AG04449 (cell line): ENCODE measurements at regions of chr6 and their contacts with region 1.

Region 1: DNA sequence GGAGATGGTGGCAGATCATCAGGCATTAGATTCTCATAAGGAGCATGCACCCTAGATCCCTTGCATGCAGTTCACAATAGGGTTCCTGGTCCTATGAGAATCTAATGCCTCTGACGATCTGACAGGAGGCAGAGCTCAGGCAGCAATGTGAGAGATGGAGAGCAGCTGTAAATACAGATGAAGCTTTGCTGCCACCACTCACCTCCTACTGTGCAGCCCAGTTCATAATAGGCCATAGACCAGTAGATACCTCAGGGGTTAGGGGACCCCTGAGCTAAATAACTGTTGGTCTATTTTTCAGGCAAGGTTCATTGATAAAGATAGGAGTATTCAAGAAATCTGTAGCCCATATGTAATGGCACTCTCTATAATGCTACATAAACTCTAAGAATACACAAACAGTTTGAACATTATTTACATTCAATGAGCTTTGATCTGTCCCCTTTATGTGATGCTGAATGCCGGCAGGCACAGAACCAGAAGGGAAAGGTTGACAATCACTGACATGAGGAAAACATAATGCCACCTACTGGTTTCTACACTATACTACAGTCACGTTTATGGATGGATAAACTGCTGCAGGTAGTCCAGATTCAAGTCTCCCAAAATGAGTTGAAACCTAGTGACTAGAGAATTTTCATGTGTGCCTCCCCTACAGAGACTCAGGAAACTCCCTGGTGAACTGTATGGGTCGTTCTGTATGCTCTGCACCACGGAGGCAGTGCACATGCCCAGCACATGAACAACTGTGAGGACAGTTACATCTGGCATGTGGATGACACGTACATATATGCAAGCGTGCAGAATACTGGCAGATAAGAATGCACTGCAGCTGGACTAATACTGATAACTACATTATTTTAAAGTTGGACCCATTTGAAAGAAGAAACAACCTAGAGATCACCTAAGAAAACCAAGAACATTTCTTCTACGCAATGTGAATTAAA is 72.0 kb downstream of the DST start:
- DNase-seq: no peak
- H3K4me3 ChIP-seq: no peak overlapping the region
- CTCF ChIP-seq: peak; percentile 49

Region 2: GRCh38 chr6:56359201-56359899 is 211.3 kb before region 1 on chr6:
- CTCF ChIA-PET with region 1: interaction called, 31 read pairs
- POLR2A ChIA-PET with region 1: no interaction called
- DNase-seq: no peak
- H3K4me3 ChIP-seq: no peak overlapping the region
- CTCF ChIP-seq: peak; percentile 66

Region 3: GRCh38 chr6:56370561-56371211 is 200.0 kb before region 1 on chr6:
- CTCF ChIA-PET with region 1: interaction called, 23 read pairs
- POLR2A ChIA-PET with region 1: no interaction called
- DNase-seq: peak; percentile 53
- H3K4me3 ChIP-seq: no peak overlapping the region
- CTCF ChIP-seq: no peak

Region 4: DNA sequence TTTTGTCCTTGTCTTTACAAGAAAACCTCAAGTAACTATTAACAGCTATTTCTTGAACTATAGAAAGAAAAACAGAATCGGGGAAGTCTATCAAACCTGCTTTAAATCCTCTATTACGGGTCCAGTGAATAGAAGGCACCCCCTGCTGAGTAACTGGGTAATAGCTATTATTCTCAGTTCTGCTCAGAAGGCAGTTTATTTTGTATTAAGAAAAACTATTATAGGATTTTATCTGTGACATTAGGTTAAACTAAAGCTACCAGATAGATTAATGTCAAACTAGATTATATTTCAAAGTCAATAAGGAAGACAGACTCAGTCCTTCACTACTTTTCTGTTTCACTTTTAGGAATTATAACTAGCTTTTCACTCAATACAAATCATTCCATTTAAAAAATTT is 21.7 kb before region 1 on chr6:
- CTCF ChIA-PET with region 1: interaction called, 27 read pairs
- POLR2A ChIA-PET with region 1: no interaction called
- DNase-seq: no peak
- H3K4me3 ChIP-seq: no peak overlapping the region
- CTCF ChIP-seq: peak; percentile 11

Region 5: DNA sequence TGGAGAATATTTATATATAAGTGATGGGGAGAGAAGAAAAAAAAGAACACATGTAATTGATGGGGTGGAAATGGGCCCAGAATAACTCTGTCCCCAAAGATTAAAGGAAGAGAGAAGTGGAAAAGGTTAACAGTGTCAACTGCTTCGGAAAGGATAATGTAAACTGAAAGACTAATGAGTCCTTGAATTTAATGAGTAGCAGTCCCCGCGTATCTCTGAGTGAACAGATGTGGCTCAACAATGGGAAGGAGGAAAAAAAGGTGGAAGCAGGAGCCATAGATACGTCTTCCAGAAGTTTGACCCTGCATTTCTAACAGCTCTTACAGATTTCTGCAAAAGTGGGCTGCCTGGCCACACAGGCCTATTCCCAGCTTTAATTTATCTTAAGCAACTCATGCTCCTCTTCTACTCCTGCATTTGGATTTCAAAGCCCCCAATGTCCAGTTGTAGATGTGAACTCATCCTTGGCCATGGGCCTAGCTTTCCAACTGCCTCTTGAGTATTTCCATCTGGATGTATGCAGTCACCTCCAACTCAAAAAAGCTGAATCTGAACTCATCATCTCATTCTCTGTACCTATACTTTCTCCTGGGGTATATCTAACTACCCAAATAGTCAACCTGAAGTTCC is 10.7 kb after region 1 on chr6:
- CTCF ChIA-PET with region 1: interaction called, 32 read pairs
- POLR2A ChIA-PET with region 1: no interaction called
- DNase-seq: no peak
- H3K4me3 ChIP-seq: no peak overlapping the region
- CTCF ChIP-seq: no peak